ENCODE measurements at regions of chr12 and their contacts with region 1.

Region 1: GRCh38 chr12:6323340-6323994 is 13.0 kb downstream of the PLEKHG6 start:
- DNase-seq: peak in 1 of 2 experiments; percentile 72
- H3K4me3 ChIP-seq: peak overlapping the region in 2 of 4 experiments; percentile 6 to 48; a peak in 3 of 8 replicates
- H3K27ac ChIP-seq: peak overlapping the region; percentile 89
- H3K4me1 ChIP-seq: peaks cover 13 to 41% (median 29%) of the 10 kb centered on the region in 4 experiments
- H3K27me3 ChIP-seq: no peaks in the 10 kb centered on the region
- CTCF ChIP-seq: peak in 2 of 3 experiments; percentile 19 to 40; a peak in 3 of 4 replicates
- EP300 ChIP-seq: 0 out of 3 replicates have a peak, but pooled peaks of 1 of the 2 experiments have one; percentile 45
- POLR2A ChIP-seq: peak in 1 of 2 experiments; percentile 38; a peak in 1 of 3 replicates
- RAD21 ChIP-seq: peak in 1 of 2 experiments; percentile 37; a peak in 2 of 4 replicates

Region 2: DNA sequence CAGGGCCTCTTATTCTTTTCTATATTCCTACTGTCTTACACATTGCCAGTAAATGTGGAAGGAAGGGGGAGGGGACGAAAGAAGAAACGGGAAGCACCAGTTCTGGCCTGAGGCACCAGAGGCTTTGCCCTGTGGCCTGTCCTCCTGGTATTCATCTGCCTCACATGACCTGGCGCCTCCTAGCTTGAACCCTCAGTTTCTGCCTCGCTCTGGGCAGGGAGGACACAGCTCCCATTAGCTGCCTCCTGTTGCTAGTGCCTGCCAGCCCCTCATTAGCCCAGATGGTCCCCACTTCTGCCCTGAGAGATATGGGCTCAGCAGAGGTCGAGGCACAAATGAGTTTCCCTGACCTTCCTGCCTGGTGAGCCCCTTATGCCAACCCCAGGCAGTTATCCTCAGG is 15.9 kb before region 1 on chr12:
- CTCF ChIA-PET with region 1: interaction called, 14 read pairs
- POLR2A ChIA-PET with region 1: interaction called, 24 read pairs
- DNase-seq: no peak
- H3K4me3 ChIP-seq: no peak overlapping the region
- H3K27ac ChIP-seq: no peak overlapping the region
- H3K4me1 ChIP-seq: peaks cover 0 to 17% (median 13%) of the 10 kb centered on the region in 4 experiments; a peak in 6 of 7 replicates
- H3K27me3 ChIP-seq: peaks cover 0 to 4% (median 2%) of the 10 kb centered on the region in 4 experiments; a peak in 4 of 7 replicates
- CTCF ChIP-seq: no peak
- EP300 ChIP-seq: no peak
- POLR2A ChIP-seq: no peak
- RAD21 ChIP-seq: no peak

Region 3: DNA sequence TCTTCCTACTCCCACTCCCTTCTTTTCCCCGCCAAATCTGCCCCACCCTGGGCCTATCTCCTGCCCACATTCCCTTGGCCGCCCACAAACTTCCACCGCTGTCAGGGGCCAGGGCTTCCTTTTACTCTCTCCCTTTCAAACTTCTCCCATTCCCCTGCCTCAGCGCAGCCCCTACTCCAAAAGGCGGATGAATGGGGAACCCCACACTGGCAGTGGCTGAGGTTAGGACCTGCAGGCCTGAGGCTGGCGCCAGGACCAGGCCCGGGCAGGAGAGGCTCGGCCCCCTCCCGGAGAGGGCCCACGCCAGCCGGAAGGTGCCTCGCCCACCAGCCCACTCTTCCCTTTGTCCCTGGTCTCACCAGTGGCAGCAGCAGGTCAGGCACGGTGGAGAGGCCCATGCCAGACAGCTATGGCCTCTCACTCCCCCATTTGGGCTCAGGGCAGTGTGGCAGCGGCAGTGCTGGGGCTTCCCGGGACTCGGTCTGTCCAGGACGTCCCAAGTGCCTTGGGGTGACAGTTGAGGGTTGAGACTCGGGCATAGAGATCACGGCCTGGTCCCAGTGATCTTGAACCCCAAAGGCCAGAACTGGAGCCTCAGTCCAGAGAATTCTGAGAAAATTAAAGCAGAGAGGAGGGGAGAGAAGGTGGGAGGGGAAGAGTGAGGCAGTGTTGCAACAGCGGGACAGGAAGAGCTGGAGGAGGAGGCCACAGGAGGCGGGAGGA is 18.1 kb after region 1 on chr12 and contains the start of gene TNFRSF1A:
- CTCF ChIA-PET with region 1: interaction called, 109 read pairs
- POLR2A ChIA-PET with region 1: interaction called, 286 read pairs
- DNase-seq: no peak
- H3K4me3 ChIP-seq: peak within 1 kb of the TSS; percentile 54 to 89 (median 82)
- H3K27ac ChIP-seq: peak within 1 kb of the TSS; percentile 44; the same call in 1 of the 2 replicates
- H3K4me1 ChIP-seq: peaks cover 22 to 50% (median 30%) of the 10 kb centered on the region in 4 experiments
- H3K27me3 ChIP-seq: no peaks in the 10 kb centered on the region
- CTCF ChIP-seq: no peak
- EP300 ChIP-seq: no peak
- POLR2A ChIP-seq: no peak
- RAD21 ChIP-seq: no peak
- total RNA-seq, gene TNFRSF1A: 42.1 and 45.8 TPM in 2 replicates

Region 4: DNA sequence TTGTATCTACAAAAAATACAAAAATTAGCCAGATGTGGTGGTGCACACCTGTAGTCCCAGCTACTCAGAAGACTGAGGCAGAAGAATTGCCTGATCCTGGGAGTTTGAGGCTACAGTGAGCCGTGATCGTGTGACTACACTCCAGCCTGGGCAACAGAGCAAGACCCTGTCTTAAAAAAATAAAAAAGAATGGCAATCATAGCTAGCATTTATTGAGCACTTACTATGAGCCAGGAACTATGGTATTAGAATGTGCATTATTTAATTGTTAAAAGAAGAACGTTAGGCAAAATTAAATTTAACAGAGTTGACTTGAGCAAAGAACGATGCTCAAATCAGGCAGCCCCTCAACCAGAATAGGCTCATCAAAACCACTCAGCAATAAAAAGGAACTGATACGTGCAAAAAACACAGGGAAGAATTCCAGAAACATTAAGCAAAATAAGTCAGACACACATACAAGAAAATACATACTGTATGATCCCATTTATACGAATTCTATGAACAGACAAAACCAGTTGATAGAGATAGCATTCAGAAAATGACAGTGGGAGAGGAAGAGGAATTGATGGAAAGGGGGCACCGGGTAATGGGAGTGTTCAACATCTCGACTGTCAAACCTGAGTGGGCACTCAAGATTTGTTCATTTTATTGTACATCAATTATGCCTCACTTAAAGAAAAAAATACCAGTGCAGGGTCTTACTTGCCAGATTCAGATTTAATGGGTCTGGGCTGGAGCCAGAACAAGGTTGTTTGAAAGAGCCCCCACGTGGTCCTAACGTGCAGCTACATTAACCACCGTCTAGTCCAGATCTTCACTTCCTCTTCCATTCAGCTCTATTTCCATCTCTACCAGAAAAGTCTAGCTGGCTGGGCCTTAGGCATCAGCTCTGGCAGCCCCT is 43.9 kb after region 1 on chr12:
- CTCF ChIA-PET with region 1: interaction called, 66 read pairs
- POLR2A ChIA-PET with region 1: interaction called, 214 read pairs
- DNase-seq: no peak
- H3K4me3 ChIP-seq: no peak overlapping the region
- H3K27ac ChIP-seq: no peak overlapping the region
- H3K4me1 ChIP-seq: peaks cover 10 to 23% (median 14%) of the 10 kb centered on the region in 4 experiments
- H3K27me3 ChIP-seq: no peaks in the 10 kb centered on the region
- CTCF ChIP-seq: 0 out of 4 replicates have a peak, but pooled peaks of 1 of the 3 experiments have one; percentile 3
- EP300 ChIP-seq: no peak
- POLR2A ChIP-seq: no peak
- RAD21 ChIP-seq: peak in 1 of 2 experiments; percentile 9; a peak in 1 of 4 replicates

Region 5: GRCh38 chr12:6423267-6424007 is 100.0 kb after region 1 on chr12:
- CTCF ChIA-PET with region 1: interaction called, 50 read pairs
- POLR2A ChIA-PET with region 1: interaction called, 5 read pairs
- DNase-seq: peak; percentile 70 to 77
- H3K4me3 ChIP-seq: no peak overlapping the region
- H3K27ac ChIP-seq: no peak overlapping the region
- H3K4me1 ChIP-seq: peaks cover 0 to 4% (median under 1%) of the 10 kb centered on the region in 4 experiments; a peak in 2 of 7 replicates
- H3K27me3 ChIP-seq: no peaks in the 10 kb centered on the region; a peak in 1 of 7 replicates
- CTCF ChIP-seq: peak; percentile 84 to 96 (median 95)
- EP300 ChIP-seq: no peak
- POLR2A ChIP-seq: no peak
- RAD21 ChIP-seq: peak; percentile 97 to 99

Region 6: DNA sequence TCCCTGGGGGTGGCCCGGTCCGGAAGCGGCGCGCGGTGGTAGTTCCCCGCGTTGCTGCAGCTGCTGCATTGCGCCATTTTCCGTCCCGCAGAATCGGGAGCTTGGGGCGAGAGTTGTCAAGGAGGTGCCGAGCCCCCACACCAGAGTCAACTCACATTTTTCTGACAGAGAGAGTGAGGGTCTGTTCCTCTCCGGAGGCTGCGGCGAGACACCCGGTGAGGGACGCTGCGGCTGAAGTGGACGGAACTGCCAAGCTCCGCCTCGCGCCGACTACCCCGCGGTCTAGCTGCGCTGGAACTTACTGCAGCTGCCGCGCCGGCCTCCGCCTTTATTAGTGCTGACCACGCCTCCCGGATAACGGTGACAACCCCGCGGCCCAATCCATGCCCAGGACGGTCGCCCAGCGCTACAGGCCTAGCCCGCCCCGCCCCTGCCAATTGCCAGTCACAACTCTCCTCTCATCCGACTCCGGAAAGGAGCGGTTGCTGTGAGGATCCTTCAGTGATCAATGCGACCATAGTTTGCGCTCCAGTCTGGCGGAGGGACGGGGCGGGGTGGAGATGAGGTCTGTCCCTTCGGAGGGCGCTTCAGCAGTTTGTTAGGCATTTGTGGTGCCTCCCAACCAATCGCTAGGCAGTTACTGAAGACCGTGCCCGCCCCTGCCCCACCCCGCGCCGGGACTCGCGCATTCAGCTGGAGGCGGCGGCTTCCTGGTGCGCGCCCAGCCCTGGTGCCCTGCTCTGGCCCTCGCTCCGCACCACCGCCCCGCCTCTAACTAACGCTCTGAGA is 147.1 kb after region 1 on chr12 and contains the start of gene VAMP1:
- CTCF ChIA-PET with region 1: interaction called, 107 read pairs
- POLR2A ChIA-PET with region 1: interaction called, 27 read pairs
- DNase-seq: peak; percentile 91 to 97
- H3K4me3 ChIP-seq: peak within 1 kb of the TSS; percentile 75 to 87 (median 86)
- H3K27ac ChIP-seq: peak within 1 kb of the TSS; percentile 67; the same call in 1 of the 2 replicates
- H3K4me1 ChIP-seq: peaks cover 3 to 7% (median 3%) of the 10 kb centered on the region in 4 experiments; a peak in 3 of 7 replicates
- H3K27me3 ChIP-seq: no peaks in the 10 kb centered on the region; a peak in 1 of 7 replicates
- CTCF ChIP-seq: no peak
- EP300 ChIP-seq: no peak
- POLR2A ChIP-seq: peak; percentile 99
- RAD21 ChIP-seq: no peak
- total RNA-seq, gene VAMP1: 9.3 and 10.8 TPM in 2 replicates

Region 7: DNA sequence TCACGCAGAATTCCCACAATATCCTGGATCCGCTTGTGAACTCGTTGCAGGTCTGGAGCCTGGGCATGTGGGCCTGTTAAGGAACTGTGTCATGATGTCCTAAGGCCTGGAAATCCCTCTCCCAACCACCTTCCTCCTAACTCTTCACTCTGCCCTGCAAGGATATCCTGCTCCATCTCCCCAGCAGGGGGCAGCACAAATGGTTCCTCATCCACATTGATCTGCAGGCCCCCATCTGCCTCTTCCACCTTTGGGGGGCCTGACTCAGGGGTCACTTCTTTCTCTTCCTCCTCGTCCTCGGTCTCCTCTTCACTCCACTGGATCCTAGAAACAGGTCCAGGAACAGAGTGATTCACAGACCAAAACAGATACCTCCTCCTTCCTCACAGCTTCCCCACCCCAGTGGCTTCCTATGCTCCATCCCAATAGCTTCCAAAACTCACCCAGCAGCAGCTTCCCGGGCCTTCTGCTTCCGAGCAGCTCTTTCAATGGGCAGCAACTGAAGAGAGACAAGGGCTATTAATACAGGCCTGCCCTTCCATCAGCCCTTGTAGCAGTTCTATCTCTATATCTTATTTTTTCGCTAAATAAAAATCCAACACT is 240.1 kb after region 1 on chr12:
- CTCF ChIA-PET with region 1: no interaction called
- POLR2A ChIA-PET with region 1: no interaction called
- DNase-seq: peak in 1 of 2 experiments; percentile 89
- H3K4me3 ChIP-seq: no peak overlapping the region
- H3K27ac ChIP-seq: no peak overlapping the region
- H3K4me1 ChIP-seq: peaks cover 0 to 5% (median 4%) of the 10 kb centered on the region in 4 experiments; a peak in 4 of 7 replicates
- H3K27me3 ChIP-seq: no peaks in the 10 kb centered on the region
- CTCF ChIP-seq: peak; percentile 62 to 85 (median 80)
- EP300 ChIP-seq: no peak
- POLR2A ChIP-seq: no peak
- RAD21 ChIP-seq: peak in 1 of 2 experiments; percentile 5; a peak in 1 of 4 replicates

Measured in H1 (cell line).